Right ventricle myocardium superior (tissue), 1 donor: ENCODE measurements at regions of chr19 and their contacts with region 1.

Region 1: DNA sequence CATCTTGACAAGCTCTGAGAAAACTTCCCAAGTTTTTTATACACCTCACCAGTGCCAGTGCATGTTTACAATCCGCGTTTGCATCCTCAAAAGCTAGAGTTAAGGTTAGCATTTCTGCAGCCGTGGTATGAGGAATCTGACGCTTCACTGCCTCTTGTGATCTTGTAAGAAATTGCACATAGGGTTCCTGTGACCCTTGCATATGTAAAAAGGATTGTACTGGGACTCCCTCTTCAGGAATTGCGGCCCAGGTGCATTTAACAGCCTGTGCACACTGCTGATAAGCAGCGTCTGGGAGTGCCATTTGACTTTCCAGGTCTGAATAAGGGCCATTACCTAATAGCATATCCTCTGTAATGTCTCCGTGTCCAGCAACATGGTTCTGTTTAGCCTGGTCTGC is 15.3 kb downstream of the FPR3 start:
- DNase-seq: no peak
- ATAC-seq: peak; percentile 62

Region 2: GRCh38 chr19:51712460-51713083 is 97.7 kb before region 1 on chr19:
- intact Hi-C with region 1: loop called (anchors 10 kb)
- DNase-seq: no peak
- ATAC-seq: peak; percentile 45

Region 3: GRCh38 chr19:52070476-52070875 is 260.2 kb after region 1 on chr19:
- intact Hi-C with region 1: no loop called
- DNase-seq: no peak
- ATAC-seq: no peak